ENCODE measurements at regions of chr1 and their contacts with region 1.

Region 1: DNA sequence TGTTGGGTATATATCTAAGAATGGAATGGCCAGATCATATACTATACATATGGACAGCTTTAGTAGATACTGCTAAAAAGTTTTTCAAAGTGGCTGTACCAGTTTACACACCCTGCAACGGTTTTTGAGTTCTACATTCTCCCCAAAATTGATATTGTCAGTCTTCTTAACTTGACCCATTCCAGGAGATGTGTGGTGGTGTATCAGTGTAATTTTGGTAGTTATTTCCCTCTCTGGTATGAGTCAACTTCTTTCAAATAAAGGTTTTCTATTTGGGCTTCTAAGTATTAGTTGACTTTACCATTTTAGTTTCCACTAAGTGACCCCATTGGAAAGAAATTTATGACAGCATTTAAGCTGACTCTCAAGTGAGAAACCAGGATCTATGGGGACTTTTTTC is 29.2 kb downstream of the INKA2 start:
- DNase-seq: no peak
- H3K4me3 ChIP-seq: no peak overlapping the region
- CTCF ChIP-seq: no peak

Region 2: DNA sequence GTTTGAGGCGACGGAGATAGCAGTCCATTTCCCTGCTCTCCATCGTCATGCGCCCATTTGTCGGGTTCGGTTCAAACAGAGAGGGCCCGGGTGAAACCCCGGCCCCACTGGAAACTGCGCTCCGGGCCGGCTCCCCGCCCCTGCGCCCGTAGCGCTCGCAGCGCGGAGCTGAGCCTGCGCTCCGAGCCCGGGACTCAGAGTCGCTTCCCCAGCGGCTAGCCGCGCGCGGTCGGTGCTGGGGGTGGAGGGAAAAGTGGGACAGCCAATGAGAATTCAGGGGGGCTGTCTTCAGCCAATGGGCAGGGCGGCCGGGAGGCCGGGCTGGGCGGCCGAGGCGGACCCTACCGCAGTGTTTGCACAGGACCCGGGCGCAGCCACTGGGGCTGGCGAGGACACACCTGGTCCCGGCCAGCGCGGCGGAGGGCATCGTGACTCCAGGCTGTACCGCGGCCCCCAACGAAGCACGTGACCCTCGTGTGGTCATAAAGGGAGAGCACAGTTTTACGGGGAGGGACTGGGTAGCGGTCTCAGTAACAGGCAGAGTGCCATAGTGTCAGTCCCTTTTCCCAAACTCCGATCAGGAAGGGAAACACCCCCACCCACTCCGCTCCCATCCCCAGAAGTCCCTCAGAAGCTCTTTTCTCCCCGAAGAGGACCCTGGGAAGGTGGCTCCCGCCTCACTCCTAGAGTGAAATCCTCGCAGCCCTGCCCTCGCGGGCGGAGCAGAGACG is 29.4 kb after region 1 on chr1 and contains the start of gene INKA2:
- CTCF ChIA-PET with region 1: interaction called, 289 read pairs
- POLR2A ChIA-PET with region 1: no interaction called
- DNase-seq: no peak
- H3K4me3 ChIP-seq: peak within 1 kb of the TSS; percentile 54
- CTCF ChIP-seq: no peak

Region 3: GRCh38 chr1:111755331-111756123 is 45.5 kb after region 1 on chr1 and contains the start of gene DDX20:
- CTCF ChIA-PET with region 1: interaction called, 314 read pairs
- POLR2A ChIA-PET with region 1: interaction called, 4 read pairs
- DNase-seq: peak; percentile 95
- H3K4me3 ChIP-seq: peak within 1 kb of the TSS; percentile 91
- CTCF ChIP-seq: peak; percentile 85

Measured in AG04449 (cell line).